ENCODE measurements at regions of chr5 and their contacts with region 1.

Region 1: DNA sequence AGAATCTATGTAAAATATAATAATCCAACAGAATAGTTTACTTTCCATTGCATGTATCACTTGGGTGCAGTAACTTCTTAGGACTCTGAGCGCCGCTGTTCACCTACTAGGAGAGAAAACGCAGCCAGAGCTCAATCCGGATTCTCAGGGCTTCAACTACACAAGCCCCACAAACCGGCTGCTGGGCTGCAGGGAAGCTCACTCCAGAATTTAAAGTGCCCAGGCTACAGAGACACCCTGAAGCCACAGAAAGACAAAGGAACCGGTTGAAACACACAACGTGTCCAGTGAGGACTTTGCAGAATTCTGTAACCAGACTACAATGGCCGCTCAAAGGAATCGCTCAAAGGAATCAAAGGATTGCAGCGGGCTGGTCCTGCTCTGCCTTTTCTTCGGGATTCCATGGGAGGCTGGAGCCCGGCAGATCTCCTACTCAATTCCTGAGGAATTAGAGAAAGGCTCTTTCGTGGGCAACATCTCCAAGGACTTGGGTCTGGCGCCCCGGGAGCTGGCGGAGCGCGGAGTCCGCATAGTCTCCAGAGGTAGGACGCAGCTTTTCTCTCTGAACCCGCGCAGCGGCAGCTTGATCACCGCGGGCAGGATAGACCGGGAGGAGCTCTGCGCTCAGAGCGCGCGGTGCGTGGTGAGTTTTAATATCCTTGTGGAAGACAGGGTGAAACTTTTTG is at the start of gene PCDHGA10:
- DNase-seq: peak; percentile 34
- H3K4me3 ChIP-seq: no peak within 1 kb of the TSS
- H3K27ac ChIP-seq: no peak within 1 kb of the TSS
- H3K4me1 ChIP-seq: no peaks in the 10 kb centered on the region
- H3K27me3 ChIP-seq: no peaks in the 10 kb centered on the region
- CTCF ChIP-seq: no peak
- total RNA-seq, gene PCDHGA10: 7.8 to 7.9 TPM

Region 2: GRCh38 chr5:141223112-141223783 is 189.7 kb before region 1 on chr5 and contains the start of gene PCDHB14:
- CTCF ChIA-PET with region 1: no interaction called
- dilution Hi-C with region 1: no loop called
- in situ Hi-C with region 1: loop called in 1 of 2 experiments (anchors 25 kb)
- intact Hi-C with region 1: loop called (anchors 10 kb)
- DNase-seq: peak; percentile 65
- H3K4me3 ChIP-seq: peak within 1 kb of the TSS in 2 of 3 experiments; percentile 17 to 32
- H3K27ac ChIP-seq: no peak within 1 kb of the TSS
- H3K4me1 ChIP-seq: no peaks in the 10 kb centered on the region
- H3K27me3 ChIP-seq: no peaks in the 10 kb centered on the region
- CTCF ChIP-seq: peak in 1 of 2 donors; percentile 38
- total RNA-seq, gene PCDHB14: 1.4 to 1.7 TPM

Region 3: GRCh38 chr5:141359790-141360426 is 53.1 kb before region 1 on chr5 and contains the start of gene PCDHGB2:
- CTCF ChIA-PET with region 1: no interaction called
- dilution Hi-C with region 1: no loop called
- in situ Hi-C with region 1: no loop called
- intact Hi-C with region 1: loop called (anchors 5 kb)
- DNase-seq: no peak
- H3K4me3 ChIP-seq: peak within 1 kb of the TSS in 2 of 3 experiments; percentile 13
- H3K27ac ChIP-seq: no peak within 1 kb of the TSS
- H3K4me1 ChIP-seq: peaks cover 5% of the 10 kb centered on the region
- H3K27me3 ChIP-seq: peaks cover 6% of the 10 kb centered on the region
- CTCF ChIP-seq: peak; percentile 31 to 42
- total RNA-seq, gene PCDHGB2: 1.7 TPM

Region 4: DNA sequence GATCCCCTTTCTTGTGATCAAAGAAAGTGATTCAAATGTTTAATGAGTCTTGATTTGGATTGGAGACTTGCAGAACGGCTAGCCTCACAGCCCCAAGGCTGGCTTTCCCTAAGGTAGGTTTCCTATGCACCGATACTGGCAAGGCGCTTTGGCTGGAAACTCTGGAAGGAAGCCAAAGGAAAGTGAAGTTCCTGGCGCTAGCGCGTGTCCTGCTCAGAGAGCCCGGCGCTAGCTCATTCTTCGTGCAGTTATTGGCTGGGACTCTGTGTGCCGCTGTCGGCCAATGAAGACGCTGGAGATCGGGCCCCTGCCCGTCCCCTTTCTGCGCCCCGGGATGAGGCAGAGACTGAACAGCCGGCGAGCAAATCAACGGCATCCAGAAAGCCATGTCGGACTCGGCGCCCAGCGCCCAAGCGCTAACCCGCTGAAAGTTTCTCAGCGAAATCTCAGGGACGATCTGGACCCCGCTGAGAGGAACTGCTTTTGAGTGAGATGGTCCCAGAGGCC is 62.7 kb after region 1 on chr5 and contains the start of gene PCDHGC3:
- CTCF ChIA-PET with region 1: interaction called, 3 read pairs
- dilution Hi-C with region 1: no loop called
- in situ Hi-C with region 1: no loop called
- intact Hi-C with region 1: loop called (anchors 1 kb)
- DNase-seq: peak; percentile 95
- H3K4me3 ChIP-seq: peak within 1 kb of the TSS; percentile 50 to 73 (median 72)
- H3K27ac ChIP-seq: peak within 1 kb of the TSS; percentile 79
- H3K4me1 ChIP-seq: peaks cover 25% of the 10 kb centered on the region
- H3K27me3 ChIP-seq: no peaks in the 10 kb centered on the region
- CTCF ChIP-seq: peak; percentile 14 to 46
- total RNA-seq, gene PCDHGC3: 74.7 to 76.3 TPM

Region 5: GRCh38 chr5:141590127-141590526 is 177.1 kb after region 1 on chr5:
- CTCF ChIA-PET with region 1: no interaction called
- dilution Hi-C with region 1: no loop called
- in situ Hi-C with region 1: no loop called
- intact Hi-C with region 1: no loop called
- DNase-seq: no peak
- H3K4me3 ChIP-seq: no peak overlapping the region
- H3K27ac ChIP-seq: no peak overlapping the region
- H3K4me1 ChIP-seq: no peaks in the 10 kb centered on the region
- H3K27me3 ChIP-seq: no peaks in the 10 kb centered on the region
- CTCF ChIP-seq: no peak

Region 6: DNA sequence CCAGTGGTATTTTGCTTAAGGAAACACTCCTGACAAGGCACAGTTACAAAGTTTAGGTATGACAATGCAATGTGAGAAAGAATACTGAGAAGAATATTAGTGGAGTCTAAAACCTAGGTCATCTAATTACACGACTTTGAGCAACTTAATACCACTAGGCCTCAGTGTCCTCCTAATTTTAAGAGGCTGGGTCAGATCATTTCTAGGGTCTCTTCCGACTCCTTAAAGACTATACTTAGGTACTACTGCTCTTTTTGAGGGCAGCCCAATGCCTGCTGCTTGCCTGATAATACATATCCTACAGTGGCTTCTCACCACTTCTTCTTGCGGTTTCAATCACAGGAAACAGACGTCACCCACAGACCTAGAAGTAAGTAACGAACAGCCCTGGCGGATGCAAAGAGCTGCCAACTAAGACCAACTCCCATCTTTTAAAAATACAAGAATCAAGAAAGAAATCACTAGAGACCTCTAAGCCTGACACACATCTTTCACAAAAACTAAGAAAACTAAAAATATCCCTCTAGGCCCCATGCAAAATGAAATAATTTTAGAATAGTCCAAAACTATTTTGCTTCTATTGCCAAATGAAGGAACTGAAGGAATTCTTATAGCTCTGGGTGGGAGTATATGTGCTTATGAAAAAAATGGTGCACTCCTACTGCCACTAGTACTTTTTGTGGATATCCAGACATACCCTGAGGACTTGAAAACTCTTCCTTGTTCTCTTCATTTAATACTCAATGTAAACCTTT is 192.7 kb after region 1 on chr5:
- CTCF ChIA-PET with region 1: no interaction called
- dilution Hi-C with region 1: no loop called
- in situ Hi-C with region 1: no loop called
- intact Hi-C with region 1: no loop called
- DNase-seq: no peak
- H3K4me3 ChIP-seq: no peak overlapping the region
- H3K27ac ChIP-seq: peak overlapping the region; percentile 98
- H3K4me1 ChIP-seq: peaks cover 14% of the 10 kb centered on the region
- H3K27me3 ChIP-seq: no peaks in the 10 kb centered on the region
- CTCF ChIP-seq: no peak